ENCODE measurements at regions of chr18 and their contacts with region 1.

Region 1: DNA sequence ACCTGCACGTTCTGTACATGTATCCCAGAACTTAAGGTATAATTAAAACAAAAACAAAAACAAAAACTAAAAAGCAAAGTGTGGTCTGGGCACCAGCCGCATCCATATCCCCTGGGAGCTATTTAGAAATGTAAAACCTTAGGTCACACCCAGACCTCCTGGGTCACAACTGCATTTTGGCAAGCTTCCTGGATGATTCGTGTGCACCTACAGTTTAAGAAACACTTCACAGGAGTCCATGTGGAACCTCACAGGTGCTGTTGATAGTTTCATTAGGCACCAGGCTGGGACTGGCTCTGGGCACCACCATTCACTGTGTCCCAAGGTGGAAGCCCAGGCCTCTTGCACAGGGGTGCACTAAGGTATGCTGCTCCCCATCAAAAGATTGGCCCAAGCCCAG is 103.6 kb upstream of the BOD1L2 start:
- DNase-seq: peak; percentile 80
- H3K4me3 ChIP-seq: no peak overlapping the region
- H3K27ac ChIP-seq: no peak overlapping the region
- H3K4me1 ChIP-seq: no peaks in the 10 kb centered on the region
- H3K27me3 ChIP-seq: no peaks in the 10 kb centered on the region
- CTCF ChIP-seq: no peak
- EP300 ChIP-seq: no peak
- POLR2A ChIP-seq: no peak

Region 2: DNA sequence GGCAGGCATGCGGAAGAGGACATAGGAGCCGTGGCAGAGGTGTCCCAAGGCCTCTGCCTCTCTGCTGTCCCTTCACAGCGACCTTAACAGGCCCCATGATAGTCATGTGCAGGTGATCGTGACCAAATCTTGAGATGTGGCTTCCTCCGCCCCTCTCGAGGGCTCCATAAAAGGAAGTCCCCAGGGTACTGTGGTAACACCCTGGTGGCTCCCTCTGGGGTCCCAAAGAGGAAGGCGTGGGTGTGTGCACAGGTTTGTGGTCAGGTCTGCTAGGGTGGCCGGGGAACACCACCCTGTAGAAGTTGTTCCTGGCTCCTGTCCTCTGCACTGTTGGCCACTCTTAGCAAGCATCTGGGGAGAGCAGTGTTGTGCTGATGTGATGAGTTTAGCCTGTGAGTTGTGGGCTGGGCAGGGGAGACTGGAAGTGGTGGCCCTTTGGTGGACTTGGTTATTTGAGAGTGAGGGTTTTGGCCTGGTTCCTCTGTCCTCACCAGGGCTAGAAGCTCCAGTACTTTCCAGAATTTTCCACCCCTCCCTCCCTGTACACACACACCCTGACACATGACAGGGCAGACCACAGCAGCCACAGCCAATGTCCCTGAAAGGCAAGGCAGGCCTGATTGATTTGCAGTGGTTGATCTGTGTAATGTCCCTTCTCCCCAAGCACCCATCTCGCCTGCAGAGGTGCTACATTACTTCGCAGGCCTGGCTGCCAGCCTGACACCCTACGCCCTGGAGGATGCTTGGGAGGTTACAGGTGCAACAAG is 34.7 kb after region 1 on chr18:
- intact Hi-C with region 1: no loop called
- DNase-seq: no peak
- H3K4me3 ChIP-seq: no peak overlapping the region
- H3K27ac ChIP-seq: no peak overlapping the region
- H3K4me1 ChIP-seq: no peaks in the 10 kb centered on the region
- H3K27me3 ChIP-seq: peaks cover 0 to 49% (median 0%) of the 10 kb centered on the region in 4 donors
- CTCF ChIP-seq: no peak
- EP300 ChIP-seq: no peak
- POLR2A ChIP-seq: no peak

Region 3: DNA sequence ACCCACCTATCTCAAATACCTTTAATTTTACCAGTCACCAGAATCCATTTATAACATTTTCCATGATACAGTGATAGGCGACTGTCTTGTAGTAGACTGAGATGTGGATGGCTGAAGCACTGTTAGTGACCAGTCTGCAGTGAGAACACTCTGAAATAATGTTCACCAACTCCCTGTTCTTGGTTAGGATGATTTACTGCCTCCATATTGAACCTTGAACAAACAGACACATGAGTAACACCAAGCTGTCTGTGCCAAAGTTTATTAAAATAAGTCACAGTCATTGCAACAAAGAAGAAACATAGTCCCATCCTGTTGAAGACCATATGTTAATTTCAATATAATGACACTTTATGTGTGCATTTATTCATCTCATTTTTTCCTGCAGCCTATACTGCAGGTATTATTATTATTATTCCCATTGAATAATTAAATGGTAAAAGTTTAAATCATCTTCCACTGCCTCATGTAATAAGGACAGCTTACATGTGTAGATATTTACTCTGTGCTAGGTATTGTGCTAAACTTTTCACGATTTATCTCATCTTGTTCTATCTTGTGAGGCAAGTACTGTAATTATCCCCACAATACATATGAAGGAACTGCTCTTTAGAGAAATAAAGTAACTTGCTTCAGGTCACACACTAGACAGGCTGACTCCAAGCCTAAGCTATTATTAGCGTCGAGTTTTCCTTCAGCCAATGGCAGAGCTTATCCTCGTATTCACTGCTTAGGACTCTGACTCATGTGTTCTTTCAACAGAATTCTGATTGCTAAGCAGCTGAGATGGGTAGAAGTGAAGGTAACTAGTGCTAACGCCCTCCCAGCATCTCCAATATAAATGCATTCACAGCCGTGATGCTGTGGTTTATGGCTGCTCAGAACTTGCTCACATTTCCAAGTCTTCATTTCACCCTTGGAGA is 454.4 kb after region 1 on chr18:
- intact Hi-C with region 1: loop called (anchors 10 kb)
- DNase-seq: no peak
- H3K4me3 ChIP-seq: no peak overlapping the region
- H3K27ac ChIP-seq: no peak overlapping the region
- H3K4me1 ChIP-seq: peaks cover 0 to 7% (median 2%) of the 10 kb centered on the region in 4 donors
- H3K27me3 ChIP-seq: peaks cover 0 to 4% (median 0%) of the 10 kb centered on the region in 4 donors
- CTCF ChIP-seq: no peak
- EP300 ChIP-seq: no peak
- POLR2A ChIP-seq: no peak

Region 4: GRCh38 chr18:57595347-57595746 is 552.1 kb after region 1 on chr18:
- intact Hi-C with region 1: no loop called
- DNase-seq: no peak
- H3K4me3 ChIP-seq: no peak overlapping the region
- H3K27ac ChIP-seq: no peak overlapping the region
- H3K4me1 ChIP-seq: no peaks in the 10 kb centered on the region
- H3K27me3 ChIP-seq: no peaks in the 10 kb centered on the region
- CTCF ChIP-seq: no peak
- EP300 ChIP-seq: no peak
- POLR2A ChIP-seq: no peak

Region 5: GRCh38 chr18:58054041-58054781 is 1011.0 kb after region 1 on chr18:
- intact Hi-C with region 1: no loop called
- DNase-seq: no peak
- H3K4me3 ChIP-seq: no peak overlapping the region
- H3K27ac ChIP-seq: no peak overlapping the region
- H3K4me1 ChIP-seq: peaks cover 0 to 16% (median 4%) of the 10 kb centered on the region in 4 donors
- H3K27me3 ChIP-seq: no peaks in the 10 kb centered on the region
- CTCF ChIP-seq: no peak
- EP300 ChIP-seq: no peak
- POLR2A ChIP-seq: no peak

Measured in esophagus muscularis mucosa (tissue), 4 donors.